Activated B cell treated with CpG ODN at 0.5 μM for 24 hours (primary cell): ENCODE measurements at regions of chr11 and their contacts with region 1.

Region 1: DNA sequence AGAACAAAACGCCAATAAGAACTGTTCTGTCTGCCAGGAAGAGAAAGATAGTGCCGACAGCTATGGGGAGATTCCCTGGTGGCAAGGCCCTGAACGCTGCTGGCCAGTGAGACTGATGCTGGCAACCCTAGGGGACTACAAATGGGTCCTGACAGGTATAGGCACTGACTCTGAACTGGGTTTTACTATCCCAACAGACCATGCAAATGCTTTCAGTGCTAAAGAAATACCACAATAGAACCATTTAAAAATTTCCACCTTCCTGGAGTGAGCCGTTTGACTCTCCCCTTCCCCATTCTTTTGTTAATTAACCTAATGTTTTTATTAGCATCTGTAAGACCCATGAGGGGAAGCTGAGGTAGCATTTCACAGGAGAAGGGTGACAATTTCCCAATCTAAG is 25.7 kb downstream of the USP28 start:
- DNase-seq: no peak
- ATAC-seq: no peak
- H3K4me3 Mint-ChIP-seq: no peak overlapping the region
- H3K27ac Mint-ChIP-seq: no peak overlapping the region
- H3K4me1 Mint-ChIP-seq: peaks cover 22% of the 10 kb centered on the region
- H3K27me3 Mint-ChIP-seq: no peaks in the 10 kb centered on the region
- CTCF ChIP-seq: no peak

Region 2: GRCh38 chr11:113814181-113814580 is 35.5 kb before region 1 on chr11:
- CTCF ChIA-PET with region 1: no interaction called
- POLR2A ChIA-PET with region 1: no interaction called
- intact Hi-C with region 1: loop called (anchors 5 kb)
- DNase-seq: no peak
- ATAC-seq: no peak
- H3K4me3 Mint-ChIP-seq: no peak overlapping the region
- H3K27ac Mint-ChIP-seq: no peak overlapping the region
- H3K4me1 Mint-ChIP-seq: no peaks in the 10 kb centered on the region
- H3K27me3 Mint-ChIP-seq: no peaks in the 10 kb centered on the region
- CTCF ChIP-seq: no peak

Region 3: DNA sequence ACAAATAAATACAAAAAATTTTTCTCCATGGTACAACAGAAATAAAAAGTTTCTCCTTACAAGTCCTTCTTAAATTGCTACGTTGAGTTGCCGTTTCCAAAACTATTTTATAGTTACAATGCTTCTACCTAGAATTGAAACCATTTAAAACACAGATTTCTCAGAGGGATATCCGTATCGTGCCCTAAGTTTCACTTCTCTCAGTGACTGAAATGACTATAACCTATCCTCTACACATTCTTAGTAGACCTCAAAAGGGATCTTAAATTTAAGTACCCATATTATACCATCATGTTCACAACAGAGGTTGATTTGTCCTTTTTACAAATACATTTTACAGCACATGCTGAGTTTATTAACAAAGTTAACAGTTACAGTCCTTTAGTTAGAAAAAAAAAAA is 18.4 kb before region 1 on chr11:
- CTCF ChIA-PET with region 1: no interaction called
- POLR2A ChIA-PET with region 1: no interaction called
- intact Hi-C with region 1: loop called (anchors 2 kb)
- DNase-seq: no peak
- ATAC-seq: peak; percentile 93
- H3K4me3 Mint-ChIP-seq: peak overlapping the region; percentile 68
- H3K27ac Mint-ChIP-seq: peak overlapping the region; percentile 84
- H3K4me1 Mint-ChIP-seq: peaks cover 31% of the 10 kb centered on the region
- H3K27me3 Mint-ChIP-seq: no peaks in the 10 kb centered on the region
- CTCF ChIP-seq: no peak